ENCODE measurements at regions of chr12 and their contacts with region 1.

Region 1: DNA sequence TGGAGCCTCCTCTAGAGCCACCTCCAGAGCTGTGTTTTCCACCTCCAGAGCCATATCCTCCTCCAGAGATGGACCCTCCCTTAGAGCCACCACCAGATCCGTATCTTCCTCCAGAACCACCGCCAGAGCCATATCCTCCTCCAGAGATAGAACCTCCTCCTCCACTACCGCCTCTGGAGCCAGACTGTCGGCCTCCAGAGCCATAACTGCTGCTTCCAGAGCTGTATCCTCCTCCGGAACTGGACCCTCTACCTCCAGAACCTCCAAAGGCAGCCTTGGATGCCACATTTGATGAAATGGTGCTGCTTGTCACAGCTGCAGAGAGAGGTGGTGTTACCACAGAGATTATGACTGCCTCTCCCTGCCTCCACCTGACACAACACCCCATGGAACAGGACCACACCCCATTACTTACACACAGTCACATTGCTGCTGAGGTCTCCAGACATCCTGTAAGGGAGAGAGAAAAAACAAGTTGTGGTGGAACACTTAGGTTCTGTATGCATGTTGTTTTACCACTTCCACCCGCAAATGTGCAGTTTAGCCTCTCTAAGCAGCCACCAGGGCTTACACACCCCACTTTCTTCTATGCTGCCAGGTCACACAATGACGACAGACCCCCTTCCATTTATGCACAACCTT is 6.8 kb downstream of the KRT2 start:
- DNase-seq: peak; percentile 51 to 88
- ATAC-seq: peak; percentile 85 to 91 (median 90)
- H3K4me3 ChIP-seq: no peak overlapping the region
- H3K4me3 Mint-ChIP-seq: peak overlapping the region; percentile 84
- H3K27ac ChIP-seq: peak overlapping the region; percentile 89
- H3K27ac Mint-ChIP-seq: peak overlapping the region; percentile 97 to 98
- H3K4me1 ChIP-seq: peaks cover 42% of the 10 kb centered on the region
- H3K4me1 Mint-ChIP-seq: peaks cover 75 to 86% of the 10 kb centered on the region in 2 donors
- H3K27me3 ChIP-seq: no peaks in the 10 kb centered on the region
- H3K27me3 Mint-ChIP-seq: no peaks in the 10 kb centered on the region
- CTCF ChIP-seq: no peak

Region 2: DNA sequence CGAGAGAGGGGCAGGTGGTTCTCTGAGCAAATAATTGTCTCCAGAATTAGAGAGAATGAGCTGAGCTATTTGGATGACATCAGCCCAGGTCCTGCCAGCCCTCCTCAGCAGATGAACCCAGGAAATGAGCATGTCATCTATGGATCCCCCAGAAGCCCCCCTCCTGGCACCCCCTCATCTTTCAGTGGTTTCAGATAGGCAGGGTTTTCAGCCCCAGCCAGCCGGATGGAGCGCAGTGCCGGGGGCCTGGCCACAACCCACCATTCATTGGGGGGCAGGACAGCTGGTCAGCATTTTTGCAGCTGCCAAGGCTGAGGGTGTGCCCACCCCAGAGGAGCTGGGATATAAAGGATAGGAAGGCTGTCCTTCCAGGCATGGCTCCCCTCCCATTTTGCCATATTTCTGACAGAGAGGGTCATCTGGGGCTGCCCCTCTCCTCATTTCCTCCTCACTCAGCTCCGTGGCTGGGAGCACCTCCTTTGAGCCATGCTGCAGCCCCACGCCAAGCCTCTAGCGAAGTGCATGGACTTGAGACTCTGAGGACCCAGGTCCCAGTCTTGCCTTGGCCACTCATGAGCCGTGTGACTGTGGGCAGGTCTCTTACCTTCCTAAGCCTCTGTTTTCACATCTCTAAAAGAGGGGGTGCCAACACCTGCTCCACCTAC is 86.3 kb before region 1 on chr12:
- intact Hi-C with region 1: loop called (anchors 2 kb)
- DNase-seq: peak; percentile 40 to 55
- ATAC-seq: peak in 2 of 3 donors; percentile 35 to 56
- H3K4me3 ChIP-seq: no peak overlapping the region
- H3K4me3 Mint-ChIP-seq: peak overlapping the region; percentile 68
- H3K27ac ChIP-seq: peak overlapping the region; percentile 63
- H3K27ac Mint-ChIP-seq: peak overlapping the region; percentile 47 to 91
- H3K4me1 ChIP-seq: peaks cover 79% of the 10 kb centered on the region
- H3K4me1 Mint-ChIP-seq: peaks cover 80 to 81% of the 10 kb centered on the region in 2 donors
- H3K27me3 ChIP-seq: no peaks in the 10 kb centered on the region
- H3K27me3 Mint-ChIP-seq: no peaks in the 10 kb centered on the region
- CTCF ChIP-seq: no peak

Region 3: DNA sequence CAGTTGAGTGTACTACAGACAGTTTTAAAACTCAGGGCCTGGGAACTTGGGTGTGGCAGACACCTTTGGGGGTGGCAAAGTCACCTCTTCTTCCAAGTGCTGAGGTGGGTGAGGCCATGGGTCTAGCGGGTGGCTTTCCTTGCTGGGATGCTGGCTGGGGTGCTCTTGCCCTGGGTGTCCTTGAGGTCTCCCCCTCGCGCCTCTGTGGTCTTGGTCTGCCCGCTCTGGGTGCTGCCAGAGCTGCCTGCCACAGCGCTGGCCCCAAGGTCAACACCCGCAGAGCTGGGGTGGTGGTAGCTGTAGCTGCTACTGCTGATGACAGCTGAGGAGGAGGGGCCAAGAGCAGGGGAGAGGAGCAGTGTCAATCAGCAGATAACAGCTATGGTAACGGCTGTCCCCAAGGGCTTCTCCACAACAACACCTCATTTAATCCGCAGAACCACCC is 78.4 kb before region 1 on chr12:
- intact Hi-C with region 1: loop called (anchors 1 kb)
- DNase-seq: peak; percentile 86 to 92
- ATAC-seq: peak; percentile 89 to 94 (median 94)
- H3K4me3 ChIP-seq: no peak overlapping the region
- H3K4me3 Mint-ChIP-seq: peak overlapping the region; percentile 93
- H3K27ac ChIP-seq: peak overlapping the region; percentile 94
- H3K27ac Mint-ChIP-seq: peak overlapping the region; percentile 91 to 97
- H3K4me1 ChIP-seq: peaks cover 47% of the 10 kb centered on the region
- H3K4me1 Mint-ChIP-seq: peaks cover 46 to 54% of the 10 kb centered on the region in 2 donors
- H3K27me3 ChIP-seq: peaks cover 5% of the 10 kb centered on the region
- H3K27me3 Mint-ChIP-seq: peaks cover 0 to 14% of the 10 kb centered on the region in 2 donors
- CTCF ChIP-seq: no peak

Region 4: DNA sequence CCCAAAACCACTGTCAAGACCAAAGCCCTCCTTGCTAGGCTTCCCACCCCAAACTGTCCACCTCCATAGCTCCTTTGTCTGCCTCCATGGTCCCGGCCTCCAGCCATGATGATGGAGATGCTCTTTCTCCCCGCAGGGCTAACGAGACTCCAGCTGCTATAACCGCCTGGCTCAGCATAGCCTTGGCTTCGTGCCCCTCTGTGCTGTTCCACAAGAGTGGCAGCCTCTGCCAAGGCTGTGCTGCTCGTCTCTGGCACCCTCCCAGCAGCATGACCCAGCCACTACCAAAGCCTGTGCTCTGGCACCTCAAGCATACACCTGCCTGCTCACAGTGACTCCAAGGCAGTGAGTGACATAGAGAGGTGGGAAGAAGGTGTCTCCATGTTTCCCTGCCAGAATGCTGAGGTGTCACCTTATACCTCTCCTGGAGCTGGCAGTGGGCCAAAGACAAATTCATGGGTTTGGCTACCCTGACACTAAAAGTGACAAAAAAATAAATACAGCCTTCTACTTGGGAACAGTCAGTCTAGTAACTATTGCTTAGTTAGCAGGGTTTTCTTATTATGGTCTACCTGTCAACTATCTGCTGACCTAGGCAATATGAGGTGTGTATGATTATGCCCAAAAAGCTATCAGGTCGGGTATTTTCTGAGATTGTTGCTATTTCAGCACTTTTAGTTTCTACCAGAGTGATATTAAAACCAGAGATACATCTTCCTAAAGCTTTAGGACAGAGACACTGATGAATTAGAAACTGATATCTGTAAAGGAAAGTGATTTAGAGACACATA is 10.8 kb before region 1 on chr12:
- intact Hi-C with region 1: loop called (anchors 1 kb)
- DNase-seq: no peak
- ATAC-seq: no peak
- H3K4me3 ChIP-seq: no peak overlapping the region
- H3K4me3 Mint-ChIP-seq: no peak overlapping the region
- H3K27ac ChIP-seq: no peak overlapping the region
- H3K27ac Mint-ChIP-seq: peak overlapping the region; percentile 18 to 67
- H3K4me1 ChIP-seq: peaks cover 45% of the 10 kb centered on the region
- H3K4me1 Mint-ChIP-seq: peaks cover 74% of the 10 kb centered on the region in 2 donors
- H3K27me3 ChIP-seq: no peaks in the 10 kb centered on the region
- H3K27me3 Mint-ChIP-seq: no peaks in the 10 kb centered on the region
- CTCF ChIP-seq: no peak

Region 5: GRCh38 chr12:52681526-52682380 is 36.5 kb after region 1 on chr12:
- intact Hi-C with region 1: loop called (anchors 5 kb)
- DNase-seq: peak in 1 of 2 donors; percentile 70
- ATAC-seq: peak; percentile 78 to 99 (median 90)
- H3K4me3 ChIP-seq: no peak overlapping the region
- H3K4me3 Mint-ChIP-seq: peak overlapping the region; percentile 47
- H3K27ac ChIP-seq: no peak overlapping the region
- H3K27ac Mint-ChIP-seq: peak overlapping the region in 1 of 2 donors; percentile 65
- H3K4me1 ChIP-seq: peaks cover 6% of the 10 kb centered on the region
- H3K4me1 Mint-ChIP-seq: peaks cover 40 to 55% of the 10 kb centered on the region in 2 donors
- H3K27me3 ChIP-seq: peaks cover 3% of the 10 kb centered on the region
- H3K27me3 Mint-ChIP-seq: peaks cover 9 to 27% of the 10 kb centered on the region in 2 donors
- CTCF ChIP-seq: no peak

Region 6: GRCh38 chr12:52739963-52740362 is 94.7 kb after region 1 on chr12:
- intact Hi-C with region 1: no loop called
- DNase-seq: no peak
- ATAC-seq: no peak
- H3K4me3 ChIP-seq: no peak overlapping the region
- H3K4me3 Mint-ChIP-seq: no peak overlapping the region
- H3K27ac ChIP-seq: no peak overlapping the region
- H3K27ac Mint-ChIP-seq: no peak overlapping the region
- H3K4me1 ChIP-seq: no peaks in the 10 kb centered on the region
- H3K4me1 Mint-ChIP-seq: peaks cover 0 to 11% of the 10 kb centered on the region in 2 donors
- H3K27me3 ChIP-seq: peaks cover 3% of the 10 kb centered on the region
- H3K27me3 Mint-ChIP-seq: peaks cover 3 to 32% of the 10 kb centered on the region in 2 donors
- CTCF ChIP-seq: no peak

Region 7: DNA sequence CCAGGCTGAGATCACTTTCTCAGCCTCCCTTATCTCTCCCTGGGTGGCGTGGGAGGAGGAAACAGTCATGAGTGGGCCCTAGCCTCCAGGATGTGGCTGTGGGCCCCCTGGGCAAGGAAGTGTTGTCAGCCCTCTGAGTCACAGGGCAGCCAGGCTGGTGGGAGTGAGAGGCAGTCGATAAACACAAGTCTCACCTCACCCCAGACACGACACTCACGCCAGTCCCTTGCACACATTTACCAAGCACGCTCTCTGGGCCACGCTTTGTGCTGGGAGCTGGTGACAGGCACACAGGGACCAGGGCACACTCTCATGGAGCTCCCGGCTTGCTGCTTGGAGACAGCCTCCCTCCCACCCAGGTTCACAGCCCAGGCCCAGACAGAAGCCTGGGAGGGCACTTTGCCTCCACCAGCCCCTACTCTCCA is 190.8 kb after region 1 on chr12:
- intact Hi-C with region 1: loop called (anchors 1 kb)
- DNase-seq: peak; percentile 28 to 65
- ATAC-seq: peak; percentile 90 to 98 (median 91)
- H3K4me3 ChIP-seq: no peak overlapping the region
- H3K4me3 Mint-ChIP-seq: peak overlapping the region; percentile 60
- H3K27ac ChIP-seq: peak overlapping the region; percentile 34
- H3K27ac Mint-ChIP-seq: peak overlapping the region; percentile 87 to 95
- H3K4me1 ChIP-seq: peaks cover 30% of the 10 kb centered on the region
- H3K4me1 Mint-ChIP-seq: peaks cover 29 to 51% of the 10 kb centered on the region in 2 donors
- H3K27me3 ChIP-seq: no peaks in the 10 kb centered on the region
- H3K27me3 Mint-ChIP-seq: peaks cover 0 to 10% of the 10 kb centered on the region in 2 donors
- CTCF ChIP-seq: no peak